Endothelial cell of umbilical vein (primary cell): ENCODE measurements at regions of chr9 and their contacts with region 1.

Region 1: GRCh38 chr9:121529237-121529987 is 29.8 kb upstream of the GGTA1 start:
- DNase-seq: peak; percentile 98
- H3K4me3 ChIP-seq: no peak overlapping the region
- H3K27ac ChIP-seq: peak overlapping the region; percentile 40
- H3K4me1 ChIP-seq: no peaks in the 10 kb centered on the region
- H3K27me3 ChIP-seq: peaks cover 2 to 3% of the 10 kb centered on the region in 2 experiments
- CTCF ChIP-seq: no peak
- POLR2A ChIP-seq: no peak

Region 2: DNA sequence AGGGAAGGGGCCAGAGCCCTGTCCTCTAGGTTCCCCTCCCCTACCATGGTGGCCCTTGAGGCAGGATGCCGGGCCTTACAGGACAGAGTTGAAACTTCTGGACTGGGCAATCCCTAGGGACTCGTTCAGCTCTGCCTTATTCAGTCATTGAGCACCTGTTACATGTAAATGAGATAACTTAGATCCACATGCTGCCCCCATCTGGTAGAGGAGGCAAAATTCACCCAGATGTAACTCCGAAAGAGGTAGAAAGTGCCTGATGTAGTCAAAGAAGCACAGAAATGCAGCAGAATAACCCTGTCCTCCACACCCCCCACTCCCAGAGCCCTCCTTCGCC is 31.3 kb before region 1 on chr9:
- CTCF ChIA-PET with region 1: interaction called, 3 read pairs
- POLR2A ChIA-PET with region 1: no interaction called
- dilution Hi-C with region 1: no loop called
- intact Hi-C with region 1: loop called (anchors 2 kb)
- DNase-seq: peak; percentile 83
- H3K4me3 ChIP-seq: no peak overlapping the region
- H3K27ac ChIP-seq: no peak overlapping the region
- H3K4me1 ChIP-seq: peaks cover 16% of the 10 kb centered on the region
- H3K27me3 ChIP-seq: peaks cover 11 to 17% of the 10 kb centered on the region in 2 experiments
- CTCF ChIP-seq: peak; percentile 66 to 68
- POLR2A ChIP-seq: no peak

Region 3: DNA sequence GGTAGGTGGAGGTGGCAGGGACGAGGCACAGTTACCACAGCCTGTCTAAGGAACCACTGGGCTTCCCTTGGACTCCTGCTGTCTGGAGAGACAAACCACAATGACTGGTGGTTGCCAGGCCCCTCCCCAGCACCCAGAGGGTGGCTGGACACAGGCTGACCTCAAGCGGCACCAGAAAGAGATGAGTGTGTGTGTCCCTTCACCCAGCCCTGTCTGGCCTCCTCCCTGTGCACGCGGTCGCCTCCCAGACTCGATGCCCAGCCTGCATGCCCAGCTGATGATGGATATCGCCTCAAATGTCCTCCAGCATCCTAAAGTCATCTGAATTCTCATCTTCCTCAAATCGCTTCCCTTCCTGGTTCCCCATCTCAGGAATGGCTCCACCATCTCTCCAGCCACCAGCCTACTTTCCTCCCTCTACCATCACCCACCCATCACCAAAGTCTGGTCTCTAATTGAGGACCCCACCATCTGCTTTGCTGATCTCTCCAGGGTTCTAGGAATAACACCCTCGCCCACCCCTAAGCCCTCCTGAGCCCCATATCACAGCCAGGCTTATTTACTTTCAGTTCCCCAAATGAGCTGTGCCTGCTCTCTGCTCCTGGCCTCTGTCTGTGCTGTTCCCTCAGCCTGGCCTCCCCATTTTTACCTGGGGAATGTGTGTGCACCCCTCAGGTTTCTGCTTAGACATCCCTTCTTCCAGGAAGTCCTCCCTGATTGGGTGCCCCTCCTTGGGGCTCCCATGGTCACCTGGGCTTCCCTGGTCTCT is 22.8 kb after region 1 on chr9:
- CTCF ChIA-PET with region 1: no interaction called
- POLR2A ChIA-PET with region 1: no interaction called
- dilution Hi-C with region 1: no loop called
- intact Hi-C with region 1: no loop called
- DNase-seq: no peak
- H3K4me3 ChIP-seq: no peak overlapping the region
- H3K27ac ChIP-seq: no peak overlapping the region
- H3K4me1 ChIP-seq: peaks cover under 1% of the 10 kb centered on the region
- H3K27me3 ChIP-seq: peaks cover 0 to 4% of the 10 kb centered on the region in 2 experiments
- CTCF ChIP-seq: no peak
- POLR2A ChIP-seq: no peak

Region 4: GRCh38 chr9:121640076-121640475 is 110.7 kb after region 1 on chr9:
- CTCF ChIA-PET with region 1: no interaction called
- POLR2A ChIA-PET with region 1: no interaction called
- dilution Hi-C with region 1: no loop called
- intact Hi-C with region 1: no loop called
- DNase-seq: peak; percentile 36
- H3K4me3 ChIP-seq: no peak overlapping the region
- H3K27ac ChIP-seq: no peak overlapping the region
- H3K4me1 ChIP-seq: peaks cover 17% of the 10 kb centered on the region
- H3K27me3 ChIP-seq: no peaks in the 10 kb centered on the region
- CTCF ChIP-seq: peak; percentile 72 to 80
- POLR2A ChIP-seq: no peak